ENCODE measurements at regions of chr15 and their contacts with region 1.

Region 1: GRCh38 chr15:90799639-90800170 is 68.7 kb upstream of the FURIN start:
- DNase-seq: no peak
- H3K4me3 ChIP-seq: no peak overlapping the region
- CTCF ChIP-seq: no peak

Region 2: GRCh38 chr15:90750186-90750585 is 49.5 kb before region 1 on chr15:
- in situ Hi-C with region 1: loop called (anchors 5 kb)
- DNase-seq: no peak
- H3K4me3 ChIP-seq: no peak overlapping the region
- CTCF ChIP-seq: no peak

Region 3: GRCh38 chr15:90829942-90830440 is 30.3 kb after region 1 on chr15:
- in situ Hi-C with region 1: loop called (anchors 5 kb)
- DNase-seq: no peak
- H3K4me3 ChIP-seq: no peak overlapping the region
- CTCF ChIP-seq: no peak

Measured in astrocyte of the cerebellum (primary cell).